ENCODE measurements at regions of chr6 and their contacts with region 1.

Region 1: DNA sequence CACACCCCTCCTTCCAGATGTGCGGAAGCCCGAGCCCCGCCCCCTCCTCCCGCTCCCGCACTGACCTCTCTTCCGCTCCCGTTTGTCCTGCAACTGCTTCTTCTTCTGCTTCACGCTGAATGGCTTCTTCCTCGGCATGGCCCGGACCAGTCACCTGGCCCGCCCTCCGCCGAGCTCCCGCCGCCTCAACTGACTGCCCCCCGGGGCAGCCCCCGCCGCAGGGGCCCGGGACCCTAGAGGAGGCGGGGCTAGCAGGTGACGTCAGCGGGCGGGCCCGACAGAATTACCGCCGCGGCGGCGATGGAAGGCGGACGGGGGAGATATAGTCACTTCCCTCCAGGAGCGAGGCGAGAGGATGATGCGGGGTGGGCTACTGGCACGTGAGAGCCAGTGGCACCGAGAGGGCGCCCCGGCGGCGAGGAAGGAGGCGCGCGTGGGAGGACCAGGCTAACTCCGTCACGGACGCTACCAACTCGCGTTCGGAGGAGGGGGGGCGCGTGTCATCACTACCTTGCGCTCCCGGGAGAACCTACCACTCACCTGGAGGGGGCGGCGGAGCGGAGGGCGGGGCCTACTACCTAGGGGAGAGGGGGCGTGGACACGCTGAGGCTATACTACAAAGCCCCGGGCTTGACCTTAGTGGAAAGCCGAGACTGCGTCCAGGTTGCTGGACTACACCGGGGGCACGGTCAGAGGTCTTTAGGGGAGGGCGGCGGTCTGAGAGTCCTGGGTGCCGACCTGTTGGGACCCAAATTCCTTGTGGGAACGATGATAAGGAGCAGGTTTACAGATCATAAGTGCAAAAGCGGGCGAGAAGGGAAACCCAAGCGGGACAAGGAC is at the start of gene GNL1:
- DNase-seq: peak; percentile 94
- ATAC-seq: peak; percentile 85
- H3K4me3 ChIP-seq: peak within 1 kb of the TSS; percentile 87 to 93 (median 90)
- H3K27ac ChIP-seq: peak within 1 kb of the TSS; percentile 94
- H3K4me1 ChIP-seq: peaks cover 26% of the 10 kb centered on the region
- H3K27me3 ChIP-seq: no peaks in the 10 kb centered on the region; a peak in 1 of 5 replicates
- CTCF ChIP-seq: no peak
- EP300 ChIP-seq: peak in 1 of 2 experiments; percentile 49; a peak in 2 of 4 replicates
- POLR2A ChIP-seq: peak; percentile 82 to 85; a peak in 3 of 4 replicates
- RAD21 ChIP-seq: peak; percentile 44; the same call in 1 of the 2 replicates
- total RNA-seq, gene GNL1: 54.8 and 55.6 TPM in 2 replicates

Region 2: DNA sequence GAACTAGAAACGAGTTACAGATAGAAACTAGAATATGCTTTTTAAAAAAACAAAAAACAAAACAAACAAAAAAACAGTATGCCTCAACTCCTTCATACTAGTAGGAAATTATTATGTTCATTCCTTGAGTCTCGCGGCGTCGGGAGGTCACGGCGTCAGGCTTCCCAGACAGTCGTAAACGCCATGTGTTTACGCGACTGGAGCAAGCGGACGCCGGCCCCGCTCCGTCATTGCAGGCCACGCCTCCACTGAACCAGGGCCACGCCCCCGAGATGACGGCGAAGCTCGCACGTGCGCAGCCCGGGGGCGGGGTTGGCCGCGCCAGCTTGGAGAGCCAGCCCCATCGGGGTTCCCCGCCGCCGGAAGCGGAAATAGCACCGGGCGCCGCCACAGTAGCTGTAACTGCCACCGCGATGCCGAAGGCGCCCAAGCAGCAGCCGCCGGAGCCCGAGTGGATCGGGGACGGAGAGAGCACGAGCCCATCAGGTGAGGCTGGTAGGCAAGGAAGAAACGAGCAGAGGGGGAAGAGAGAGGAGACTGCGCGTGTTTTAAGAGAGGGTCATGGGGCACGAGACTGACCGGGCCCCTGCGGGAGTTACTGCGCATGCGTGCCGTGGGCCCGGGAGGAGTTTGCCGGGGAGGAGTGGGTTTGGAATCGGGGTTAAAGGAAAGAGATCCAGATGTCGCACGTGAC is 14.9 kb after region 1 on chr6 and contains the start of gene ABCF1:
- CTCF ChIA-PET with region 1: no interaction called
- POLR2A ChIA-PET with region 1: interaction called, 74 read pairs
- in situ Hi-C with region 1: no loop called
- intact Hi-C with region 1: loop called (anchors 1 kb)
- DNase-seq: peak; percentile 94
- ATAC-seq: peak; percentile 92
- H3K4me3 ChIP-seq: peak within 1 kb of the TSS; percentile 67 to 88 (median 71)
- H3K27ac ChIP-seq: peak within 1 kb of the TSS; percentile 80
- H3K4me1 ChIP-seq: peaks cover 51% of the 10 kb centered on the region
- H3K27me3 ChIP-seq: no peaks in the 10 kb centered on the region; a peak in 1 of 5 replicates
- CTCF ChIP-seq: peak; percentile 18; the same call in 1 of the 2 replicates
- EP300 ChIP-seq: peak in 1 of 2 experiments; percentile 26; a peak in 1 of 4 replicates
- POLR2A ChIP-seq: peak; percentile 88 to 95
- RAD21 ChIP-seq: no peak
- total RNA-seq, gene ABCF1: 98.9 and 104 TPM in 2 replicates

Measured in HepG2 (cell line).